Naive thymus-derived CD4-positive, alpha-beta T cell (primary cell): ENCODE measurements at regions of chr12 and their contacts with region 1.

Region 1: GRCh38 chr12:55642669-55643068 is 6.0 kb downstream of the OR10P1 start:
- DNase-seq: no peak
- ATAC-seq: no peak
- H3K4me3 ChIP-seq: no peak overlapping the region
- H3K4me3 Mint-ChIP-seq: no peak overlapping the region
- H3K27ac ChIP-seq: no peak overlapping the region
- H3K27ac Mint-ChIP-seq: peak overlapping the region in 1 of 9 donors; percentile 16
- H3K4me1 ChIP-seq: peaks cover 0 to 4% of the 10 kb centered on the region in 2 donors
- H3K4me1 Mint-ChIP-seq: peaks cover 21 to 30% (median 24%) of the 10 kb centered on the region in 7 donors
- H3K27me3 ChIP-seq: no peaks in the 10 kb centered on the region
- H3K27me3 Mint-ChIP-seq: peaks cover 0 to 5% (median 2%) of the 10 kb centered on the region in 5 donors

Region 2: DNA sequence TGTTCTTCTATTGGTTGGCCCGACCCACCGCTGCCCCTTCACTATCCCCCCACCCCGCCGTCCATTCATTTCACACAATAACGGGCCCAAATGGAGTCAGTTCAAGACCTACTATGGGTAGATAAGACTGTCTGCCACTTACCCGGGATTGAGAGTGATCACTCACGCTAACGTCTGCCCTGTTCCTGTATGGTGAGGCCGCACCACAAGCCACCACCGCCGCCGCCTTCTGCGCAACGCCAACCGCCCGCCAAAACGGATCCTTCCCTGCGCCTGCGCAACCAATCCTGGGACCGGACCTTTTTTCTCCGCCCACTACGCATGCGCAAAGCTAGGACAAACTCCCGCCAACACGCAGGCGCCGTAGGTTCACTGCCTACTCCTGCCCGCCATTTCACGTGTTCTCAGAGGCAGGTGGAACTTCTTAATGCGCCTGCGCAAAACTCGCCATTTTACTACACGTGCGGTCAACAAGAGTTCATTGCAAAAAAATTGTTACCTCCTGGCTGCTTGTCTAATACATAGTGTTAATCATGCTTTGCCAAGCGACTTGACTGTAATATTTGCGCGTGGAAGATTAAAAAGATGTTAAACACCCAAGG is 1362.7 kb before region 1 on chr12 and contains the start of gene CBX5:
- CTCF ChIA-PET with region 1: no interaction called
- POLR2A ChIA-PET with region 1: no interaction called
- intact Hi-C with region 1: no loop called
- DNase-seq: peak; percentile 98 to 100 (median 100)
- ATAC-seq: peak; percentile 63
- H3K4me3 ChIP-seq: peak within 1 kb of the TSS; percentile 97
- H3K4me3 Mint-ChIP-seq: no peak within 1 kb of the TSS
- H3K27ac ChIP-seq: peak within 1 kb of the TSS; percentile 92
- H3K27ac Mint-ChIP-seq: no peak within 1 kb of the TSS
- H3K4me1 ChIP-seq: peaks cover 46 to 52% of the 10 kb centered on the region in 2 donors
- H3K4me1 Mint-ChIP-seq: peaks cover 16 to 57% (median 47%) of the 10 kb centered on the region in 7 donors
- H3K27me3 ChIP-seq: no peaks in the 10 kb centered on the region
- H3K27me3 Mint-ChIP-seq: no peaks in the 10 kb centered on the region
- total RNA-seq, gene CBX5: 40.3 to 133 (median 77.2) TPM

Region 3: GRCh38 chr12:55659486-55660385 is 17.1 kb after region 1 on chr12:
- CTCF ChIA-PET with region 1: interaction called, 80 read pairs
- POLR2A ChIA-PET with region 1: interaction called, 3 read pairs
- intact Hi-C with region 1: loop called (anchors 1 kb)
- DNase-seq: no peak
- ATAC-seq: no peak
- H3K4me3 ChIP-seq: no peak overlapping the region
- H3K4me3 Mint-ChIP-seq: no peak overlapping the region
- H3K27ac ChIP-seq: no peak overlapping the region
- H3K27ac Mint-ChIP-seq: no peak overlapping the region
- H3K4me1 ChIP-seq: no peaks in the 10 kb centered on the region
- H3K4me1 Mint-ChIP-seq: peaks cover 0 to 4% (median 2%) of the 10 kb centered on the region in 7 donors
- H3K27me3 ChIP-seq: no peaks in the 10 kb centered on the region
- H3K27me3 Mint-ChIP-seq: peaks cover 0 to 35% (median 0%) of the 10 kb centered on the region in 5 donors

Region 4: DNA sequence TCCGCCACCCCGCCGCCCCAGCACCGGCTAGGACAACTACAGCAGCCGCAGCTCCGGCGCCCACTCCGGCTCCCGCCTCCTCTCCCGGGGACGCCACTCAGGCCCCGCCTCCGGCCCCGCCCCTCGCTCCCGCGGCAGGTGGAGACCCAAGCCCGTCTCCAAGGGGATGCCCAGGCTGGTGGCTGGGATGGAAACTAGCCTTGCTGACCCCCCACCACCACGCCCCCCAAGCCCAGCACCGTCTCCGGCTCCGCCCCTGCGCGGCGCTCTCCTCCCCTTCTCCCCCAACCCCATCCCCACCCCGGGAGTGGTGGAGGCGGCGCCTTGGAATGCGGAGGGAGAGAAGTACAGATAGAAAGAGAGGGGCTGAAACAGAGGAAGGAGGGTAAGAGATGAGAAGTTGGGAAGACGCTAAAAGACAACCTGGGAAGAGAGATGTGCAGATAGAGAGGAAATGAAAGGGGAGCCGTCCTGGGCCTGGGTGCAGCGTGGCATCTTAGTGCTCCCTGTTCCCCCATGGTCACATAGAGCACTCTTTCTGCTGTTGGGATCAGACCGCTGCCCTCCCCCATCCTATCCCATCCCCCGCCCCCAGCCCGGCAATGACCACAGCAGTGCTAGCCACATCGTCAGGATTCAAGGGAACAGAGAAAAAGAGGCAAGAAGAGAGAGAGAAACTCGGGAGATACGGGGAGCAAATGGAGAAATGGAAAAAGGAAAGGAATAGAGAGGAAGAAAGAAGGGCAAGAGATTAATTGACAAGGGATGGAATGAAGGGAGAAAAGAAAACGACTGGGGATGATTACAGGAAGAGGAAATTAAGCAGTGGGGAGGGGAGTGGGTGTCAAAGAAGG is 65.4 kb after region 1 on chr12 and contains the start of gene ITGA7:
- CTCF ChIA-PET with region 1: no interaction called
- POLR2A ChIA-PET with region 1: no interaction called
- intact Hi-C with region 1: loop called in 1 of 2 experiments (anchors 5 kb)
- DNase-seq: peak in 8 of 9 donors; percentile 24 to 78 (median 38)
- ATAC-seq: peak; percentile 79
- H3K4me3 ChIP-seq: peak within 1 kb of the TSS; percentile 54
- H3K4me3 Mint-ChIP-seq: peak within 1 kb of the TSS; percentile 68 to 92 (median 82)
- H3K27ac ChIP-seq: peak within 1 kb of the TSS; percentile 4
- H3K27ac Mint-ChIP-seq: peak within 1 kb of the TSS in 4 of 9 donors; percentile 7 to 63 (median 42)
- H3K4me1 ChIP-seq: peaks cover 4 to 7% of the 10 kb centered on the region in 2 donors
- H3K4me1 Mint-ChIP-seq: peaks cover 13 to 23% (median 20%) of the 10 kb centered on the region in 7 donors
- H3K27me3 ChIP-seq: no peaks in the 10 kb centered on the region
- H3K27me3 Mint-ChIP-seq: peaks cover 0 to 72% (median 25%) of the 10 kb centered on the region in 5 donors
- total RNA-seq, gene ITGA7: 1.4 to 4.6 (median 3.6) TPM

Region 5: DNA sequence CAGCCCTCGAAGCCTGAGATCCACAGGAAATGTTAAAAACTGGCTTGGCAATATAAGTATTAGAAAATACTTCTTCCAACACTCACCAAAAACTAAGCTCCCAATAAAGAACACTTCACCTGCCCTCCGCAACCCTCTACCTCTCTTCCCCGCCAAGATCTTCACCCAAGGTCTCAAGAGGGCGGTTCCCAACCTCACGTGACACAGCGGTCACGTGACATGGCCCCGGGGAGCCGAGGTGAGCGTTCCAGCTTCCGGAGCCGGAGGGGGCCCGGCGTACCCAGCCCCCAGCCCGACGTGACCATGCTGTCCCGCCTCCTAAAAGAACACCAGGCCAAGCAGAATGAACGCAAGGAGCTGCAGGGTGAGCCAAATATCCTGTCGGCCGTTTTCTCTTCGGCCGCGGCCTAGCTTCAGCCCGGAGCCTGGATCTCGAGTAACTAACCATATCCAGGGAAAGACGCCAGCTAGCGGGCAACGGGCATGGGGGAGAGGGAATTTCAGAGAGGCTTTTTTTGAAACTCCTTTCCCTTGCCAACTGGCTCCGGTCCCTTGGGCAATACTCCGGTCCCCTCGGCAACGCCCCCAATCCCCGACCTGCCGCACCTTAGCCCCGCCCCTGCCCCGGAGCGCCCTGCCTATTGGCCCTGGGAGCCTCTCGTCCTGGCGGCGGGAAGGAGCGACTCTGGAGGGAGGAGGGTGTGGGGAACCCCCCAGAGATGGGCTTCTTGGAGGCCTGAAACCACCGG is 73.3 kb after region 1 on chr12 and contains the start of gene BLOC1S1:
- CTCF ChIA-PET with region 1: no interaction called
- POLR2A ChIA-PET with region 1: interaction called, 4 read pairs
- intact Hi-C with region 1: loop called in 1 of 2 experiments (anchors 2 kb)
- DNase-seq: peak; percentile 82 to 95 (median 90)
- ATAC-seq: peak; percentile 96
- H3K4me3 ChIP-seq: peak within 1 kb of the TSS; percentile 96
- H3K4me3 Mint-ChIP-seq: peak within 1 kb of the TSS; percentile 83 to 98 (median 94)
- H3K27ac ChIP-seq: peak within 1 kb of the TSS; percentile 92
- H3K27ac Mint-ChIP-seq: peak within 1 kb of the TSS; percentile 91 to 98 (median 97)
- H3K4me1 ChIP-seq: peaks cover 19 to 23% of the 10 kb centered on the region in 2 donors
- H3K4me1 Mint-ChIP-seq: peaks cover 15 to 41% (median 36%) of the 10 kb centered on the region in 7 donors
- H3K27me3 ChIP-seq: no peaks in the 10 kb centered on the region
- H3K27me3 Mint-ChIP-seq: peaks cover 0 to 21% (median 0%) of the 10 kb centered on the region in 5 donors
- total RNA-seq, gene BLOC1S1: 37.6 to 112 (median 71.5) TPM

Region 6: DNA sequence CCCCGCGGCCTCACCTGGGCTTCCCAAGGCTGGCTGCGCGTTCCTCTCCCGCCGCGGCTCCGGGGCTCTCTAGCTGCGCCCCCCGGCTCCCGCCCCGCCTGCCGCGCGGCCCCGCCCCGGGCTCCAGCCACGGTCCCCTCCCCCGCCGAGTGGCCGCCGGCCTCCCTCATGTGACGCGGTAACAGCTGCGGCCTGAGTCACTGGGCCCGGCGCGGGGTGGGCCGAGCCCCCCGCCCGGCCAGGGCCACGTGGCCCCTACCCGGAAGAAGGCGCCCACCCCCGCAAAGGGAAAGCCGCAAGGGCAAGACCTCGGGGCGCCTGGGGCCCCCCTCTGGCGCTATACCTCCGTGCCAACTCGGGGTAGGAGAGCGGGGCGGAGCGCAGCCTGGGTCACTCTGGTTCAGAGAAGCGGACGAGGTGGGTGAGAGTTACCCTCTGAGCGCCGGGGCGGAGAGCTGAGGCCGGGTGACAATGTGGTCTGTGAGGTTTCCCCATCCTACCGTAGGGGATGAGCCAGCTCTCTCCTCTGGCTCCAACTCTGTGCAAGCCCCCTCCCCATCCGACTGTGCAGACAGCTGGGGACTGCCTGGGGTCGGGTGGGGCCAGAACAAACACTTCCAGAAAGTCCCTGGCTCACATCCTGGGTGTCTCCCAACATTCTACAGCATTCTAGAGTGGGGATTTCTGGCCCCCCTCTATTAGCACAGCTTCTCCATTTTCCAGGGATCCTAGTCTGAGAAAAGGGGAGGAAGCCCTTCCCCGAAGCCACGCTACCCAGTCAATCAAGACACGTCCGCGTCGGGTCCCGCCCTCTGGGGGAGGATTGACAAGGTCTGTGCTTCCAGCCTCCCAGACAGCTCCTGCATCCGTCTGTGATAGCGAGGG is 86.5 kb after region 1 on chr12 and contains the start of gene CD63:
- CTCF ChIA-PET with region 1: no interaction called
- POLR2A ChIA-PET with region 1: interaction called, 7 read pairs
- intact Hi-C with region 1: loop called in 1 of 2 experiments (anchors 2 kb)
- DNase-seq: peak in 6 of 9 donors; percentile 26 to 86 (median 38)
- ATAC-seq: peak; percentile 75
- H3K4me3 ChIP-seq: peak within 1 kb of the TSS; percentile 97
- H3K4me3 Mint-ChIP-seq: peak within 1 kb of the TSS; percentile 73 to 94 (median 90)
- H3K27ac ChIP-seq: peak within 1 kb of the TSS; percentile 74
- H3K27ac Mint-ChIP-seq: peak within 1 kb of the TSS; percentile 81 to 95 (median 91)
- H3K4me1 ChIP-seq: peaks cover 13 to 20% of the 10 kb centered on the region in 2 donors
- H3K4me1 Mint-ChIP-seq: peaks cover 33 to 46% (median 38%) of the 10 kb centered on the region in 7 donors
- H3K27me3 ChIP-seq: no peaks in the 10 kb centered on the region
- H3K27me3 Mint-ChIP-seq: no peaks in the 10 kb centered on the region
- total RNA-seq, gene CD63: 43.2 to 216 (median 54.3) TPM